ENCODE measurements at regions of chr3 and their contacts with region 1.

Region 1: GRCh38 chr3:81476692-81477091 is 284.8 kb downstream of the GBE1 start:
- DNase-seq: no peak
- H3K4me3 ChIP-seq: no peak overlapping the region
- H3K4me3 Mint-ChIP-seq: no peak overlapping the region
- H3K27ac ChIP-seq: no peak overlapping the region
- H3K27ac Mint-ChIP-seq: no peak overlapping the region
- H3K4me1 ChIP-seq: no peaks in the 10 kb centered on the region
- H3K4me1 Mint-ChIP-seq: no peaks in the 10 kb centered on the region
- H3K27me3 ChIP-seq: no peaks in the 10 kb centered on the region
- H3K27me3 Mint-ChIP-seq: peaks cover 0 to 1% of the 10 kb centered on the region in 2 donors

Region 2: GRCh38 chr3:81490541-81491288 is 14.0 kb after region 1 on chr3:
- CTCF ChIA-PET with region 1: interaction called, 23 read pairs
- POLR2A ChIA-PET with region 1: no interaction called
- intact Hi-C with region 1: no loop called
- DNase-seq: peak; percentile 49 to 62 (median 56)
- H3K4me3 ChIP-seq: no peak overlapping the region
- H3K4me3 Mint-ChIP-seq: no peak overlapping the region
- H3K27ac ChIP-seq: no peak overlapping the region
- H3K27ac Mint-ChIP-seq: peak overlapping the region in 1 of 7 donors; percentile 0
- H3K4me1 ChIP-seq: no peaks in the 10 kb centered on the region
- H3K4me1 Mint-ChIP-seq: peaks cover 0 to 5% (median 2%) of the 10 kb centered on the region in 4 donors
- H3K27me3 ChIP-seq: no peaks in the 10 kb centered on the region
- H3K27me3 Mint-ChIP-seq: no peaks in the 10 kb centered on the region

Region 3: DNA sequence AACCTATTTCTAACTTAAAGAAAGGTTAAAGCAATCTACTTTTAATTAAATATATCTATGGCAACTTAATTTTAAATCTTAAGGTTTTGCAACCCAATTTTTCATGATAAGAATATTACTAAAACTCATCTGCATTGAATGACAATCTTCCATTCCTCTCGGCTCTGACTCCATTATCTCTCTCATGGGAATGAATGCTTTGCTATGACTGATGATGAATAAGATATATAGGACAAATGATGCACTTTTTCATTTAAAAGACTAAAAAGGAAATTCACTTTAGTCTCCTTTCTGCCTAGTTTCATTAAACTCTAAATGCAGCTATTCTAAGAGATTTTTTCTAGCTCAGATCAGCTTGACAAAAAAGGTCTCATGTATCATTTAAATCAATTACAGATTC is 216.1 kb after region 1 on chr3:
- CTCF ChIA-PET with region 1: no interaction called
- POLR2A ChIA-PET with region 1: no interaction called
- intact Hi-C with region 1: no loop called
- DNase-seq: no peak
- H3K4me3 ChIP-seq: no peak overlapping the region
- H3K4me3 Mint-ChIP-seq: no peak overlapping the region
- H3K27ac ChIP-seq: no peak overlapping the region
- H3K27ac Mint-ChIP-seq: no peak overlapping the region
- H3K4me1 ChIP-seq: no peaks in the 10 kb centered on the region
- H3K4me1 Mint-ChIP-seq: no peaks in the 10 kb centered on the region
- H3K27me3 ChIP-seq: no peaks in the 10 kb centered on the region
- H3K27me3 Mint-ChIP-seq: no peaks in the 10 kb centered on the region

Measured in CD4-positive, alpha-beta memory T cell (primary cell).